ENCODE measurements at regions of chr15 and their contacts with region 1.

Region 1: GRCh38 chr15:78241007-78241406 is 6.6 kb upstream of the ACSBG1 start:
- DNase-seq: peak; percentile 91
- H3K4me3 Mint-ChIP-seq: no peak overlapping the region
- H3K27ac Mint-ChIP-seq: no peak overlapping the region
- H3K4me1 Mint-ChIP-seq: peaks cover 2% of the 10 kb centered on the region
- H3K27me3 Mint-ChIP-seq: peaks cover 1% of the 10 kb centered on the region

Region 2: GRCh38 chr15:77959432-77959879 is 281.6 kb before region 1 on chr15:
- CTCF ChIA-PET with region 1: interaction called, 14 read pairs
- POLR2A ChIA-PET with region 1: no interaction called
- intact Hi-C with region 1: loop called (anchors 1 kb)
- DNase-seq: peak; percentile 87
- H3K4me3 Mint-ChIP-seq: peak overlapping the region; percentile 30
- H3K27ac Mint-ChIP-seq: no peak overlapping the region
- H3K4me1 Mint-ChIP-seq: peaks cover 7% of the 10 kb centered on the region
- H3K27me3 Mint-ChIP-seq: peaks cover 8% of the 10 kb centered on the region

Region 3: DNA sequence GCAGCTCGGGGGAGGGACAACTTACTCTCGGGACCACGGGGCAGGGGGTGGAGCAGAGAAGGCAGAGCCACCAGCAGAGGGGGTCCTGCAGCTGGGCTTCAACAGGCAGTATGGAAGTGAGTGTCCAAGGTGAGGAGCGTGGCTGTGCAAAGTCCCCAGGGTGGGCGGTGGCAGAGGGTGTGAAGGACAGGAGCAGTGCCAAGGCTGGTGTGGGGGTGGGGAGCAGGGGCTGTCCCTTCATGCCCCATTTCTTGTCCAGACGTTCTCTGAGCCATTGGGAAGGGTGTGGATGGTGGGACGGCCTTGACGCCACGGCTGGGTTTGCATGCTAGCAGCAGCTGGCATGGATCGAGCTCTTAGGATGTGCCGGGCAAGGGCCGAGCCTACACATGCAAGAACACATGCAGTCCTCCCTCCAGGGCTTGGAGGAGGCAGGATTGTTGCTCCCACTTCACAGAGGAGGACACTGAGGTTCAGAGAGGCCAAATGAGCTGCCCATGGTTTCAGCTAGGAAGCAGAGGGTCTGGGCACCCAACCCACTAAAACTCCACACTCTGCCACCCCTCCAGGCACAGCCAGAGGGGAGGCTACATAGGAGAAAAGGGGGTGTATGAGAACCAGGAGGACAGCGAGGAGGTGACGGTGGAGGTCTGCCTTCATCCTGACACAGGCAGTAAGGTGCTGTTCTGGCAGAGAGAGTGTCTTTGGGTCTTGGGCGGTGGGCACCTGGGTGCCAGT is 257.1 kb before region 1 on chr15:
- CTCF ChIA-PET with region 1: no interaction called
- POLR2A ChIA-PET with region 1: no interaction called
- intact Hi-C with region 1: no loop called
- DNase-seq: no peak
- H3K4me3 Mint-ChIP-seq: no peak overlapping the region
- H3K27ac Mint-ChIP-seq: no peak overlapping the region
- H3K4me1 Mint-ChIP-seq: peaks cover 2% of the 10 kb centered on the region
- H3K27me3 Mint-ChIP-seq: no peaks in the 10 kb centered on the region

Region 4: GRCh38 chr15:78120523-78120922 is 120.5 kb before region 1 on chr15:
- CTCF ChIA-PET with region 1: interaction called, 136 read pairs
- POLR2A ChIA-PET with region 1: no interaction called
- intact Hi-C with region 1: no loop called
- DNase-seq: no peak
- H3K4me3 Mint-ChIP-seq: no peak overlapping the region
- H3K27ac Mint-ChIP-seq: no peak overlapping the region
- H3K4me1 Mint-ChIP-seq: no peaks in the 10 kb centered on the region
- H3K27me3 Mint-ChIP-seq: no peaks in the 10 kb centered on the region

Region 5: DNA sequence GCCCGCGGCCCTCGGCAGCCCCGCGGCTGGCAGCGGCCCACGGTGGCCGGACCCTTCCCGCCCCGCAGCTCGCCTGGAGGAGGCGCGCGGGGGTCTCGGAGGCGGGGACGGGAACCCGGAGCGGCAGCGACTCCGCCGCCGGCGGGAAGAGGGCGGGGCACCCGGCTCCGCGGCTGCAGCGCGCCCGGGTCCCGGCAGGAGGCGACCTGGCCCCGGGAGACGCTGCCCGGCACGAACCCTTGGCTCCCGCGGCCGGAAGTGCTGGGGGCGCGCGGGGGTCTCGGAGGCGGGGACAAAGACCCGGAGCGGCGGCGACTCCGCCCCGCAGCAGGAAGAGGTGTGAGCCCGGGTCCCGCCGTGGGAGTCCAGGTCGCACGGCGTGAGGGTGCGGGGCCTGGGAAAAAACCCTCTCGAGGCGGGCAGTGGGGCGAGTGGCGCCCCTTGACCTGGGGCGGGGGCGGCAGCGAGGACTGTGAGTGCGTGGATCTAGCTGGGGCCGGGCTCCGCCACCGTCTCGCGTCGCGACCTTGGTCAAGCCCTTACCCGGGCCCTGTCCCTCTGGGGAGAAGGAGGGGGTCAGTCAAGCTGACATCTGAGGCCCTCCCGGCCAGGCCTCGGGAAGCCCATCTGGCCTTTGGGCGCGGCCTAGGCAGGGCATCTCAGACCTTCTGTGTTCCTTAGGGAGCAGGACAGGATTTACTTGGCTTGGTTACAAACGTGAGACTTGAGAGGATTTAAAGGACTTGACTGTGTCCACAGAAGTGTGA is 109.5 kb before region 1 on chr15 and contains the start of gene CIB2:
- CTCF ChIA-PET with region 1: interaction called, 52 read pairs
- POLR2A ChIA-PET with region 1: no interaction called
- intact Hi-C with region 1: loop called (anchors 1 kb)
- DNase-seq: peak; percentile 83
- H3K4me3 Mint-ChIP-seq: peak within 1 kb of the TSS; percentile 73
- H3K27ac Mint-ChIP-seq: peak within 1 kb of the TSS; percentile 11
- H3K4me1 Mint-ChIP-seq: peaks cover 21% of the 10 kb centered on the region
- H3K27me3 Mint-ChIP-seq: no peaks in the 10 kb centered on the region
- total RNA-seq, gene CIB2: 2.0 to 2.2 TPM

Region 6: DNA sequence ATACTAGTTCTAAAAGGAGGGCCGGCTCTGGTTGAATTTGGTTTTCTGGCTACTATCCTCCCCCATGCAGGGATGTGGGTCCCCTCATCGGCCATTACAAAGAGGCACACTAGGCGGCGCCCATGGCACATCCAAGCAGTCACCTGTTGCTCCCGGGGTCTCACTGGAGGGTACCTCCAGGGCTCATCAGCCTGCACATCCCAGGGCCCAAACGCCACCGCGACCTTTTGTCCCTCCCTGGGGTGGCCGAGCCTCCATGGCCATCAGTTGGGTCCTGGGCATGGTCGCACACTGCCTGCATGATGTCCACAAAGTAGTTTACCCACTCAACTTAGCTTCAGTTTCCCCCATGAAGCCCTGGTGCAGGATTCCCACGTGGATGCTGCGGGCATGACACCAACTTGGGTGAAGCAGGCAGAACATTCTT is 63.5 kb before region 1 on chr15:
- CTCF ChIA-PET with region 1: interaction called, 40 read pairs
- POLR2A ChIA-PET with region 1: no interaction called
- intact Hi-C with region 1: loop called (anchors 1 kb)
- DNase-seq: peak; percentile 59
- H3K4me3 Mint-ChIP-seq: no peak overlapping the region
- H3K27ac Mint-ChIP-seq: no peak overlapping the region
- H3K4me1 Mint-ChIP-seq: peaks cover 14% of the 10 kb centered on the region
- H3K27me3 Mint-ChIP-seq: no peaks in the 10 kb centered on the region

Region 7: DNA sequence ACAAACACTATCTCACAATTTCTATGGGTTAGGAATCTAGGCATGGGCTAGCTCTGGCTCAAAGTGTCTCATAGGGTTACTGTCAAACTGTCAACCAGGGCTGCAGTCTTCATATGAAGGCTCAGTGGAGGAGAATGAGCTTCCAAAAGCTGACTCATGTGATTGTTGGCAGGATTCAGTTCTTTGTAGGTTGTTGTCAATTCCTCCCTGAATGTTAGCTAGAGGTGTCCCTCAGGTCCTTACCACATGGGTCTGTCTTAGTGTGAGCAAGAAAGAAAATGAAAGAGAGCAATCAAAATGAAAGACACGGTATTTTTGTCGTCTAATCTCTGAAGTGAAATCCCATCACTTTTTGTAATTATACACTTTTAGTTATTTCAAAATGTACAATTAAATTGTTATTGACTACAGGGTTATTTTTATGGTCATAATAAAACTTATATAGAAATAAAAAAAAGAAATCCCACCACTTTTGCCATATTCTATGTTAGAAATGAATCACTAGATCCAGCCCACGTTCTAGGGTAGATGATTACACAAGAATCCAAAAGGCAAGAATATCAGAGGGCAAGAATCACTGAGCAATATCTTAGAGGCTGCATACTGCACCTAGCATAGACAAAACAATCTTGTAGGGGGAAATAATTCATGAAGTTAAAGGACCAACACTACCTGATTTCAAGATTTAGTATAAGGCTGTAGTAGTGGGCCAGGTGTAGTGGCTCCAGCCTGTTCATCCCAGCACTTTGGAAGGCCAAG is 15.0 kb before region 1 on chr15:
- CTCF ChIA-PET with region 1: interaction called, 21 read pairs
- POLR2A ChIA-PET with region 1: no interaction called
- intact Hi-C with region 1: no loop called
- DNase-seq: peak; percentile 39
- H3K4me3 Mint-ChIP-seq: no peak overlapping the region
- H3K27ac Mint-ChIP-seq: no peak overlapping the region
- H3K4me1 Mint-ChIP-seq: peaks cover 21% of the 10 kb centered on the region
- H3K27me3 Mint-ChIP-seq: no peaks in the 10 kb centered on the region

Region 8: GRCh38 chr15:78257681-78258080 is 16.7 kb after region 1 on chr15:
- CTCF ChIA-PET with region 1: interaction called, 14 read pairs
- POLR2A ChIA-PET with region 1: no interaction called
- intact Hi-C with region 1: no loop called
- DNase-seq: no peak
- H3K4me3 Mint-ChIP-seq: no peak overlapping the region
- H3K27ac Mint-ChIP-seq: no peak overlapping the region
- H3K4me1 Mint-ChIP-seq: no peaks in the 10 kb centered on the region
- H3K27me3 Mint-ChIP-seq: no peaks in the 10 kb centered on the region

Measured in activated CD4-positive, alpha-beta memory T cell treated with anti-CD3 and anti-CD28 coated beads for 36 hours (primary cell).